ENCODE measurements at regions of chr17 and their contacts with region 1.

Region 1: GRCh38 chr17:50361561-50362480 is 11.2 kb downstream of the MRPL27 start:
- DNase-seq: peak; percentile 74
- H3K4me3 Mint-ChIP-seq: no peak overlapping the region
- H3K27ac Mint-ChIP-seq: peak overlapping the region; percentile 67
- H3K4me1 Mint-ChIP-seq: peaks cover 7% of the 10 kb centered on the region
- H3K27me3 Mint-ChIP-seq: no peaks in the 10 kb centered on the region
- CTCF ChIP-seq: peak; percentile 62

Region 2: GRCh38 chr17:50244771-50245170 is 117.0 kb before region 1 on chr17:
- CTCF ChIA-PET with region 1: no interaction called
- POLR2A ChIA-PET with region 1: no interaction called
- intact Hi-C with region 1: no loop called
- DNase-seq: no peak
- H3K4me3 Mint-ChIP-seq: no peak overlapping the region
- H3K27ac Mint-ChIP-seq: no peak overlapping the region
- H3K4me1 Mint-ChIP-seq: no peaks in the 10 kb centered on the region
- H3K27me3 Mint-ChIP-seq: peaks cover 20% of the 10 kb centered on the region
- CTCF ChIP-seq: no peak

Region 3: GRCh38 chr17:50345432-50346312 is 16.1 kb before region 1 on chr17 and contains the start of gene XYLT2:
- CTCF ChIA-PET with region 1: interaction called, 13 read pairs
- POLR2A ChIA-PET with region 1: interaction called, 14 read pairs
- intact Hi-C with region 1: no loop called
- DNase-seq: peak; percentile 78
- H3K4me3 Mint-ChIP-seq: peak within 1 kb of the TSS; percentile 88
- H3K27ac Mint-ChIP-seq: peak within 1 kb of the TSS; percentile 90
- H3K4me1 Mint-ChIP-seq: peaks cover 14% of the 10 kb centered on the region
- H3K27me3 Mint-ChIP-seq: no peaks in the 10 kb centered on the region
- CTCF ChIP-seq: no peak
- total RNA-seq, gene XYLT2: 9.6 and 14.0 TPM in 2 replicates

Region 4: GRCh38 chr17:50372758-50373556 is 11.1 kb after region 1 on chr17 and contains the starts of genes EME1 and MRPL27:
- CTCF ChIA-PET with region 1: interaction called, 23 read pairs
- POLR2A ChIA-PET with region 1: interaction called, 30 read pairs
- intact Hi-C with region 1: no loop called
- DNase-seq: peak; percentile 90
- H3K4me3 Mint-ChIP-seq: peak within 1 kb of the TSS; percentile 91
- H3K27ac Mint-ChIP-seq: peak within 1 kb of the TSS; percentile 97
- H3K4me1 Mint-ChIP-seq: peaks cover 12% of the 10 kb centered on the region
- H3K27me3 Mint-ChIP-seq: no peaks in the 10 kb centered on the region
- CTCF ChIP-seq: no peak
- total RNA-seq, gene EME1: 6.0 and 6.7 TPM in 2 replicates
- total RNA-seq, gene MRPL27: 57.2 and 71.5 TPM in 2 replicates

Region 5: GRCh38 chr17:50380369-50381259 is 18.8 kb after region 1 on chr17:
- CTCF ChIA-PET with region 1: interaction called, 18 read pairs
- POLR2A ChIA-PET with region 1: interaction called, 3 read pairs
- intact Hi-C with region 1: no loop called
- DNase-seq: no peak
- H3K4me3 Mint-ChIP-seq: no peak overlapping the region
- H3K27ac Mint-ChIP-seq: no peak overlapping the region
- H3K4me1 Mint-ChIP-seq: peaks cover 5% of the 10 kb centered on the region
- H3K27me3 Mint-ChIP-seq: no peaks in the 10 kb centered on the region
- CTCF ChIP-seq: no peak

Region 6: DNA sequence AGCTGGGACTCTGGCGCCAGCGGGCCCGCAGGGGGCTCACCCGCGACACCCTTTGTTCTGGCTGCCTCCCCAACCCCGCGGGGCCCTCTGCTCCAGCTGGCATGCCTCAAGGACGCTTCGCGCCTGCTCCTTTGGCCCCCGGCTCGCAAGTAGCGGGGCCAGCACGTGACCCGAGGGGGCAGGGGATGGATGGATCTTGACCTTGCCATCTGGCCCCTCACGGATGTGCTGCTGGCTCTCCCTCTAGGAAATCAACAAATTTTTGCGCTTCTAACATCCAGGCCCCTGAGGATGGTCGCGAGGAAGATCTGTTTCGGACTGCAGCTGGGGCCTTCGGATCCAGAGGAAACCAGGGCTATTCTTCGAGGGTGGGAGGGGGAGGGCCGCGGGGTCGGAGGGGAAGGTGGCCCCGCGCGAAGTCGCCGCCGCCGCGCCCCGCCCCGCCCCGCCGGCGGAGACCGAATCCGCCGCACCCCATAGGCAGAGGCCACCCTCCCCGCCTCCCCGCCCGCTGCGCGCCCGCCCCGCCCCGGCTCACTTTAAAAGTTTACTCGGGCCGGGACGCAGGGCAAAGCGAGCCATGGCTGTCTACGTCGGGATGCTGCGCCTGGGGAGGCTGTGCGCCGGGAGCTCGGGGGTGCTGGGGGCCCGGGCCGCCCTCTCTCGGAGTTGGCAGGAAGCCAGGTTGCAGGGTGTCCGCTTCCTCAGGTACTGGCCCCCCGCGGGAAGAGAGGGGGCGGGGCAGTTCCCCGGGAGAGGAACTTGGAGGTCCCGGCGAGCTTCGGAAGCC is 64.1 kb after region 1 on chr17 and contains the start of gene ACSF2:
- CTCF ChIA-PET with region 1: interaction called, 10 read pairs
- POLR2A ChIA-PET with region 1: interaction called, 5 read pairs
- intact Hi-C with region 1: no loop called
- DNase-seq: peak; percentile 63
- H3K4me3 Mint-ChIP-seq: peak within 1 kb of the TSS; percentile 71
- H3K27ac Mint-ChIP-seq: peak within 1 kb of the TSS; percentile 93
- H3K4me1 Mint-ChIP-seq: peaks cover 16% of the 10 kb centered on the region
- H3K27me3 Mint-ChIP-seq: no peaks in the 10 kb centered on the region
- CTCF ChIP-seq: no peak
- total RNA-seq, gene ACSF2: 10.5 and 17.8 TPM in 2 replicates

Region 7: GRCh38 chr17:50697663-50698274 is 335.9 kb after region 1 on chr17:
- CTCF ChIA-PET with region 1: no interaction called
- POLR2A ChIA-PET with region 1: no interaction called
- intact Hi-C with region 1: no loop called
- DNase-seq: no peak
- H3K4me3 Mint-ChIP-seq: no peak overlapping the region
- H3K27ac Mint-ChIP-seq: peak overlapping the region; percentile 91
- H3K4me1 Mint-ChIP-seq: peaks cover 28% of the 10 kb centered on the region
- H3K27me3 Mint-ChIP-seq: no peaks in the 10 kb centered on the region
- CTCF ChIP-seq: no peak